CD8-positive, alpha-beta T cell (primary cell): ENCODE measurements at regions of chr7 and their contacts with region 1.

Region 1: GRCh38 chr7:132430861-132431822 is 145.1 kb downstream of the PLXNA4 start:
- DNase-seq: peak; percentile 25 to 92 (median 63)
- ATAC-seq: peak; percentile 91
- H3K4me3 ChIP-seq: no peak overlapping the region
- H3K4me3 Mint-ChIP-seq: peak overlapping the region; percentile 3
- H3K27ac ChIP-seq: peak overlapping the region; percentile 31 to 81
- H3K27ac Mint-ChIP-seq: peak overlapping the region; percentile 74
- H3K4me1 ChIP-seq: peaks cover 86% of the 10 kb centered on the region
- H3K4me1 Mint-ChIP-seq: peaks cover 80% of the 10 kb centered on the region
- H3K27me3 ChIP-seq: no peaks in the 10 kb centered on the region
- H3K27me3 Mint-ChIP-seq: no peaks in the 10 kb centered on the region
- CTCF ChIP-seq: no peak

Region 2: GRCh38 chr7:131619336-131620305 is 811.5 kb before region 1 on chr7:
- CTCF ChIA-PET with region 1: no interaction called
- POLR2A ChIA-PET with region 1: no interaction called
- intact Hi-C with region 1: no loop called
- DNase-seq: no peak
- ATAC-seq: no peak
- H3K4me3 ChIP-seq: no peak overlapping the region
- H3K4me3 Mint-ChIP-seq: no peak overlapping the region
- H3K27ac ChIP-seq: no peak overlapping the region
- H3K27ac Mint-ChIP-seq: no peak overlapping the region
- H3K4me1 ChIP-seq: no peaks in the 10 kb centered on the region
- H3K4me1 Mint-ChIP-seq: no peaks in the 10 kb centered on the region
- H3K27me3 ChIP-seq: no peaks in the 10 kb centered on the region
- H3K27me3 Mint-ChIP-seq: peaks cover 12% of the 10 kb centered on the region
- CTCF ChIP-seq: no peak

Region 3: DNA sequence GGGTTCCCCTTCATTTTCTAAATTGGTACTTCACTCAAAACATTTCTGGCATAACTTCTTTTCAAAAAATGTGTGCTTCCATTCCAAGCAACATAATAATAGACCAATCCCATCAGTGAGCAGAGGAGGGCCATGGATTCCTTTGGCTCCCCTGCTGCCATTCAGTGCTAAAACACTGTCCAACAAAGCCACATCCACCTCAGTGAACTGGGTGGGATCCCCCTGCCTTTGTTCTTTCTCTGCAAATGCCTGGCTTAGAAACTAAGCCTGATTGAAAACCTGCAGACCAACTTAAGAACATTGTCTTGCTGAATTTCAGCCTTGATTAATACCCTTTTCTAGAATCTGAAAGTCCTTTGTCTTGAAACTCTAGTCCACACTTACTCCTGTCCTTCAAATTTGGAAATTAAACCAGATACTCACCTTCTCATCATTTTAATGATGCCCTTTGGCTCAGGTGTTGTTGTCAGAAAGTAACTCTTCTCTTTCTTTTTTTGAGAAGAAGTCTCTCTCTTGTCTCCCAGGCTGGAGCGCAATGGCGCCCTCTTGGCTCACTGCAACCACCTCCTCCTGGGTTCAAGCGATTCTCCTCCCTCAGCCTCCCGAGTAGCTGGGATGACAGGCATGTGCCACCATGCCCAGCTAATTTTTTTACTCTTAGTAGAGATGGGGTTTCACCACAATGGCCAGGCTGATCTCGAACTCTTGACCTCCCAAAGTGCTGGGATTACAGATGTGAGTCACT is 12.8 kb after region 1 on chr7:
- CTCF ChIA-PET with region 1: interaction called, 4 read pairs
- POLR2A ChIA-PET with region 1: interaction called, 4 read pairs
- intact Hi-C with region 1: loop called in 1 of 2 experiments (anchors 1 kb)
- DNase-seq: peak in 1 of 9 experiments; percentile 42
- ATAC-seq: no peak
- H3K4me3 ChIP-seq: no peak overlapping the region
- H3K4me3 Mint-ChIP-seq: no peak overlapping the region
- H3K27ac ChIP-seq: no peak overlapping the region
- H3K27ac Mint-ChIP-seq: no peak overlapping the region
- H3K4me1 ChIP-seq: peaks cover 24% of the 10 kb centered on the region
- H3K4me1 Mint-ChIP-seq: peaks cover 44% of the 10 kb centered on the region
- H3K27me3 ChIP-seq: no peaks in the 10 kb centered on the region
- H3K27me3 Mint-ChIP-seq: no peaks in the 10 kb centered on the region
- CTCF ChIP-seq: no peak

Region 4: DNA sequence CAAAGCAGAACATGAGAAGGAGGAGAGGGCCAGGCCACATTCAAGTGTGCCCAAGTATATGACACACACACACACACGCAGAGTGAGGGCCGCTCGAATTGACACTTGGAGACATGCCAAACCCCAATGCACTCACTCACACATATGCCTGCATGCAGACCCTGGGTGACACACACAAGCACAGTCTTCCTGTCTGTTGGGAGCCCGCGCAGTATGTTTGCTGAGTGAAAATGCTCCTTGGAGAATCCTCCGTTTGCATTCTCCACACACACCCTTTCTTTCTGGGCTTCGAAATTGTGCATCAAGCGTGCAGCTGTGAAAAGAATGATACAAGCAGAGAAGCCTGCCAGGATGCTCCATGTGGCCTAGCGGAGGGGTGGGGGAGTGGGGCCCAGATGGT is 24.2 kb after region 1 on chr7:
- CTCF ChIA-PET with region 1: no interaction called
- POLR2A ChIA-PET with region 1: interaction called, 3 read pairs
- intact Hi-C with region 1: loop called (anchors 2 kb)
- DNase-seq: peak in 8 of 9 experiments; percentile 21 to 76 (median 58)
- ATAC-seq: peak; percentile 74
- H3K4me3 ChIP-seq: no peak overlapping the region
- H3K4me3 Mint-ChIP-seq: peak overlapping the region; percentile 46
- H3K27ac ChIP-seq: no peak overlapping the region
- H3K27ac Mint-ChIP-seq: peak overlapping the region; percentile 39
- H3K4me1 ChIP-seq: peaks cover 56% of the 10 kb centered on the region
- H3K4me1 Mint-ChIP-seq: peaks cover 55% of the 10 kb centered on the region
- H3K27me3 ChIP-seq: no peaks in the 10 kb centered on the region
- H3K27me3 Mint-ChIP-seq: no peaks in the 10 kb centered on the region
- CTCF ChIP-seq: no peak

Region 5: GRCh38 chr7:132480534-132480933 is 49.4 kb after region 1 on chr7:
- CTCF ChIA-PET with region 1: no interaction called
- POLR2A ChIA-PET with region 1: no interaction called
- intact Hi-C with region 1: loop called (anchors 1 to 5 kb)
- DNase-seq: no peak
- ATAC-seq: no peak
- H3K4me3 ChIP-seq: no peak overlapping the region
- H3K4me3 Mint-ChIP-seq: no peak overlapping the region
- H3K27ac ChIP-seq: no peak overlapping the region
- H3K27ac Mint-ChIP-seq: no peak overlapping the region
- H3K4me1 ChIP-seq: peaks cover 16% of the 10 kb centered on the region
- H3K4me1 Mint-ChIP-seq: peaks cover 22% of the 10 kb centered on the region
- H3K27me3 ChIP-seq: no peaks in the 10 kb centered on the region
- H3K27me3 Mint-ChIP-seq: peaks cover 2% of the 10 kb centered on the region
- CTCF ChIP-seq: no peak

Region 6: DNA sequence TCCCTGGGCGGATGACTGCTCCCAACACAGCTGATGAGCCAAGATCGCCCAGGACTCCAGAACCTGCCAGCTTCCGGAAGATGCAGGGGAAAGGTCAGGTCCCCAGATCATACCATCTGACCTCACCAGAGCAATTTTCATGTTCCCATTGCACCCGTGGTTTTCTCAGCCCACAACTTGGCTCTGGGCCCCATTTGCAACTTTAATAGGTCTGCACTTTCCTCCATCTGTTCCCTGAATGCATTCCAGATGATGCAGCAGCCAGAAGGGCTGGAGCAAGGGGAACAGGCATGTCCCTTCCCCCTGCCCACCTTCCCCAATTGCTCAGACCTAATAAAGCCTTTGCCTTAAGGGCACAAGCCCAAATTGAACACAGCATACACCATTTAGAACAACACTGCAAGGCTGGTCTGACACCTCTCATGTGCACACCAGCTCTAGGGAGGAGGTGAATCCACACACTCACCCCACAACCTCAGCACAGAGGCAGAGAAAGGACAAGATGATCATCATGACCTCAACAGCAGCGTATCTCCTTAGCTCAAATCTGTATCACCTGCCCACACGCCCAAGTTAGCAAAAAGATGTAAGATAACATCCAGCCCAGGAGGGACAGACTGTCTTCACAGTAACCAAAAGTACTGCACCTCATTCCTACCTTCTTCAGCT is 57.6 kb after region 1 on chr7:
- CTCF ChIA-PET with region 1: no interaction called
- POLR2A ChIA-PET with region 1: interaction called, 4 read pairs
- intact Hi-C with region 1: loop called (anchors 1 to 5 kb)
- DNase-seq: peak in 2 of 9 experiments; percentile 25 to 55
- ATAC-seq: no peak
- H3K4me3 ChIP-seq: no peak overlapping the region
- H3K4me3 Mint-ChIP-seq: no peak overlapping the region
- H3K27ac ChIP-seq: no peak overlapping the region
- H3K27ac Mint-ChIP-seq: no peak overlapping the region
- H3K4me1 ChIP-seq: peaks cover 54% of the 10 kb centered on the region
- H3K4me1 Mint-ChIP-seq: peaks cover 57% of the 10 kb centered on the region
- H3K27me3 ChIP-seq: no peaks in the 10 kb centered on the region
- H3K27me3 Mint-ChIP-seq: no peaks in the 10 kb centered on the region
- CTCF ChIP-seq: no peak